SK-N-SH (cell line): ENCODE measurements at regions of chr7 and their contacts with region 1.

Region 1: DNA sequence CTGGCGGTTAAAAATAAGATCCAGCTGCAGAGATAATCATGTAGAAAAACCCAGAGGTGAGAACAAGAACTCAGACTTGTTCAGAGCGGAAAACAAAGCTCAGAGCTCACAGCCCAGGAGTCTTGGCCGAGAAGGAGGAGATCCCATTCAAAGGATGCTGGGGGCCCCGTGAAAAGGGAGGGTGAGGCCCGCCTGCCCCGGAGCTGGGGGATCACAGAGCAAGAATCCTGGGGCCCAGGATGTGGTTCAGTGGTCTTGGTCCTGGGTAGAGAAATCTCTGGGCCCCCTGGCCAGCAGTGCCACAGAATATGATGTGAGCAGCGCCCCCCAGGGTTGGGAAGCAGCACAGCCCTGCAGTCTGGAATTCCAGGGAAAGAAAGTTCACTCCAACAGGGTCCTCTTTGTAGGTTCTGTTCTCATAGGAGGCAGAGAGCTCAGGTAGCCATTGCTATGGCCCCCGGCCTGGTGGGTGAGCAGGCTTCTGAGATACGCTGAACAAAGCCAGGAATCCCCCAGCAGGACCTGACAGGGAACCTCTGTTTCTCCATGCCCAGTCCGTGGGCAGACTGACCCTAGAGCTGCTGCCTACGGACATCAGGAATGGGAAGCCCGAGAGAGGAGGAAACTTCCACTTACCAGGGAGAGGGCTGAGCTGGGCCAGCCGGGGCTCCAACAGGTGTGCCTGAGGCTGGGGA is 77.7 kb upstream of the GNA12 start:
- DNase-seq: peak; percentile 82
- H3K4me3 ChIP-seq: peak overlapping the region in 1 of 2 experiments; percentile 33; a peak in 1 of 4 replicates
- H3K27ac ChIP-seq: 0 out of 4 replicates have a peak overlapping the region, but pooled peaks of 1 of the 2 experiments have one; percentile 7
- H3K4me1 ChIP-seq: peaks cover 0 to 13% of the 10 kb centered on the region in 2 experiments; a peak in 1 of 4 replicates
- H3K27me3 ChIP-seq: peaks cover 9% of the 10 kb centered on the region; the same call in 1 of the 2 replicates
- CTCF ChIP-seq: peak; percentile 56
- EP300 ChIP-seq: no peak
- RAD21 ChIP-seq: peak; percentile 30; the same call in 1 of the 2 replicates

Region 2: DNA sequence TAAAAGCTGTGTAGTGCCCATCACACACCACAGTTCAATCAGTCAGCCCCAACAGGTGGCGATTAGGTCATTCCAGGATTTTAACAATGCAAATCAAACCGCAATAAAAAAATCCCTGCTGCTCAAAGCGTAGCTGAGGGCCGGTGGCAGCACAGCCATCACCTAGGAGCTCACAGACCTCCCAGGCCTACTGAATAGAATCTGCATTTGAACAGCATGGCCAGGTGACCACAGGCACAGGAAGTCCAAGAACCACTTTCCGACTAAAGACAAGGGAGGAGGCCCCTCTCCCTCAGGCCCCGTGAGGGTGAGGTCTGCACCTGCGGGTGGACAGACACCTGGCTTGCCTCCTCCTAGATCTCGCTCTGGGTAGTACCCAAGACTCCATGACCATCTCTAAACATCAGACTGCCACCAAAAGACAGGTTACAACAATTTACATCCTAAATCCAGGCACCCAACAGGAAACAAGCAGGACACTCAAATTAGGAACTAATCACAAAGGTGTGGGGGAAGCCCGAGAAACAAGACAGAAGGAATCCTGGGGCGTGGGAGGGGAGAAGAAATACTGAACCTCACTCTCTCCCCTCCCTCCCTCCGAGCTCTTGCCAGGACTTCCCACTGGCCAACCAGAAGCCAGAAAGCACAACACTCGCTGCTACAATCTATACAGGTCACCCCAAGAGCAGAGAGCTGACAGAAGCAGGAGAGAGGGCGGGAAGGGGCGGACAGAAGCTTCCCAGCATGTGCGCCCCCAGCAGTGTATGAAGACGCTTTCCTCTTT is 96.9 kb before region 1 on chr7:
- CTCF ChIA-PET with region 1: no interaction called
- POLR2A ChIA-PET with region 1: no interaction called
- DNase-seq: no peak
- H3K4me3 ChIP-seq: no peak overlapping the region
- H3K27ac ChIP-seq: no peak overlapping the region
- H3K4me1 ChIP-seq: peaks cover 18 to 27% of the 10 kb centered on the region in 2 experiments; a peak in 3 of 4 replicates
- H3K27me3 ChIP-seq: no peaks in the 10 kb centered on the region
- CTCF ChIP-seq: no peak
- EP300 ChIP-seq: no peak
- RAD21 ChIP-seq: no peak

Region 3: GRCh38 chr7:2894118-2894940 is 27.5 kb before region 1 on chr7:
- CTCF ChIA-PET with region 1: interaction called, 11 read pairs
- POLR2A ChIA-PET with region 1: no interaction called
- DNase-seq: no peak
- H3K4me3 ChIP-seq: no peak overlapping the region
- H3K27ac ChIP-seq: no peak overlapping the region
- H3K4me1 ChIP-seq: no peaks in the 10 kb centered on the region; a peak in 1 of 4 replicates
- H3K27me3 ChIP-seq: no peaks in the 10 kb centered on the region
- CTCF ChIP-seq: no peak
- EP300 ChIP-seq: no peak
- RAD21 ChIP-seq: no peak

Region 4: GRCh38 chr7:2911466-2911865 is 10.3 kb before region 1 on chr7:
- CTCF ChIA-PET with region 1: interaction called, 32 read pairs
- POLR2A ChIA-PET with region 1: no interaction called
- DNase-seq: no peak
- H3K4me3 ChIP-seq: no peak overlapping the region
- H3K27ac ChIP-seq: no peak overlapping the region
- H3K4me1 ChIP-seq: no peaks in the 10 kb centered on the region
- H3K27me3 ChIP-seq: 0 out of 2 replicates have a peak, but pooled peaks cover 8% of the 10 kb centered on the region
- CTCF ChIP-seq: no peak
- EP300 ChIP-seq: no peak
- RAD21 ChIP-seq: no peak

Region 5: DNA sequence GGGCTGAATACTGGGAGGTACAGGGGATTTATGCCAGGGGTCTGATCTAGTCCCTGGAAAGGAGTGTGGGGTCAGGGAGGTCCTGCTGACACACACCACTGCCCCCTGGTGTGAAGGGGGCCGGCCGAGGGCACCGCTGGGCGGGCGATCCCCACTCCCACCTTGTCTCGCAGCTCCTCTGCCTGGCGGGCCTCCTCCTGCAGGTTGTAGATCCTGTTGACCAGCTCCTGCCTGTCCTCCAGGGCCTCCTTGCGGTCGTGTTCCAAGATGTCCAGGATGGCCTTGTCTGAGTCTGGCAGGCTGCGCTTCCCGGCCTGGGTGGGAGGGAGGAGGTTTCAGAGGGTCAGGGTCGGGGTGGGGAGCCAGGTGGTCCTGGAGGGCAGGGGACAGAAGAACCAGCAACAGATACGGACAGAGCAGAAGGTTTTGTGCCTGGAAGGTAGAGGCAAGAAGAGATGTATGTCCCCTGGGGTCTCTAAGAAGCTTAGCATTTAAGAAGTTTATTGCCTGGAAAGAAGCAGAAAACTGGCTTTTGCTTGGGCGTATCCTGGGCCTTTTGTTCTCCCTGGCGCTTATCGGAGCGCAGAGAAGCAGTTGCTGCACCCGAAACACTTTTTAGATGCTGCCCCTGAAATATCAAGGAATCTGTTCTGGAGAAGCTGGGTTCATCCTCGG is 16.9 kb after region 1 on chr7:
- CTCF ChIA-PET with region 1: interaction called, 10 read pairs
- POLR2A ChIA-PET with region 1: no interaction called
- DNase-seq: no peak
- H3K4me3 ChIP-seq: no peak overlapping the region
- H3K27ac ChIP-seq: no peak overlapping the region
- H3K4me1 ChIP-seq: no peaks in the 10 kb centered on the region; a peak in 1 of 4 replicates
- H3K27me3 ChIP-seq: peaks cover 6% of the 10 kb centered on the region; the same call in 1 of the 2 replicates
- CTCF ChIP-seq: no peak
- EP300 ChIP-seq: no peak
- RAD21 ChIP-seq: no peak